HepG2 (cell line): ENCODE measurements at regions of chr6 and their contacts with region 1.

Region 1: DNA sequence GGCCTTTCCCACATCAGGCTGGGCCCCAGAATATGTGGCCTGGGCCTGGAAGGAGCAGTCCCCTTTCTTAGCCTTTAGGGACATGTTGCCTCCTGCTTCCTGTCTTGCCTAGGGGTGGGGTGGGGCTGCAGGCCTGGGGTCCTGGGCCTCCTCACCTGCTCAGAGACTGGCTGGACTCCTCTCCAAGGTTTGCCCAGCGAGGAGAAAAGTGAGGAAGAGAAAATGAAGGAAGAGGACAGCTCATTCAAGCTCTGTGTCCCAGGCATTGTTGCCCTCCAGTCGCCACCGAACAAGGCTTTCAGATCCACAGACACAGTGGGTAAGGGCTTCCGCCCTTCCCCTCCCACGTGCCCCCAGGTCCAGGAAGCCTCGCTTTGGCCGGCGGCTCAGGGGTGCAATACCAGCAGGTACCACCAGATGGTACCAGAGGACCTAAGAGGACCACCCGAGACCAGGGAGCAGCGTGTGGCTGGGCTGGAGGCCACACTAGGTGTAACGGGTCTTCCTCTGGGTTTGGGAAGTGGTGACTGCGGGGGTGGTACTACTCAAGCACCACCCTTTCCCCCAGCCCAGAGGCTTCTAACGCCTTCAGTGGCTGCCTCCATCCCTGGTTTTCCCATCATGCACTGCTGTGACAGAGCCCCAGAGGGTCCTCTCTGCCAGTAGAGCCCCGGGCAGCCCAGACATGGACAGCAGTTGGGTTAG is 5.5 kb upstream of the BAK1 start:
- DNase-seq: peak; percentile 72
- ATAC-seq: peak; percentile 29
- H3K4me3 ChIP-seq: peak overlapping the region in 1 of 3 experiments; percentile 36; a peak in 1 of 6 replicates
- H3K27ac ChIP-seq: no peak overlapping the region
- H3K4me1 ChIP-seq: peaks cover 53% of the 10 kb centered on the region
- H3K27me3 ChIP-seq: 0 out of 5 replicates have a peak, but pooled peaks cover 0 to 3% of the 10 kb centered on the region in 2 experiments
- CTCF ChIP-seq: peak; percentile 100
- EP300 ChIP-seq: no peak
- POLR2A ChIP-seq: no peak
- RAD21 ChIP-seq: peak; percentile 97

Region 2: GRCh38 chr6:33607784-33608161 is 22.2 kb after region 1 on chr6:
- CTCF ChIA-PET with region 1: interaction called, 24 read pairs
- POLR2A ChIA-PET with region 1: interaction called, 37 read pairs
- in situ Hi-C with region 1: no loop called
- intact Hi-C with region 1: no loop called
- DNase-seq: peak; percentile 79
- ATAC-seq: peak; percentile 44
- H3K4me3 ChIP-seq: no peak overlapping the region
- H3K27ac ChIP-seq: no peak overlapping the region
- H3K4me1 ChIP-seq: peaks cover 68% of the 10 kb centered on the region
- H3K27me3 ChIP-seq: no peaks in the 10 kb centered on the region; a peak in 1 of 5 replicates
- CTCF ChIP-seq: peak; percentile 76
- EP300 ChIP-seq: no peak
- POLR2A ChIP-seq: no peak
- RAD21 ChIP-seq: peak; percentile 64

Region 3: DNA sequence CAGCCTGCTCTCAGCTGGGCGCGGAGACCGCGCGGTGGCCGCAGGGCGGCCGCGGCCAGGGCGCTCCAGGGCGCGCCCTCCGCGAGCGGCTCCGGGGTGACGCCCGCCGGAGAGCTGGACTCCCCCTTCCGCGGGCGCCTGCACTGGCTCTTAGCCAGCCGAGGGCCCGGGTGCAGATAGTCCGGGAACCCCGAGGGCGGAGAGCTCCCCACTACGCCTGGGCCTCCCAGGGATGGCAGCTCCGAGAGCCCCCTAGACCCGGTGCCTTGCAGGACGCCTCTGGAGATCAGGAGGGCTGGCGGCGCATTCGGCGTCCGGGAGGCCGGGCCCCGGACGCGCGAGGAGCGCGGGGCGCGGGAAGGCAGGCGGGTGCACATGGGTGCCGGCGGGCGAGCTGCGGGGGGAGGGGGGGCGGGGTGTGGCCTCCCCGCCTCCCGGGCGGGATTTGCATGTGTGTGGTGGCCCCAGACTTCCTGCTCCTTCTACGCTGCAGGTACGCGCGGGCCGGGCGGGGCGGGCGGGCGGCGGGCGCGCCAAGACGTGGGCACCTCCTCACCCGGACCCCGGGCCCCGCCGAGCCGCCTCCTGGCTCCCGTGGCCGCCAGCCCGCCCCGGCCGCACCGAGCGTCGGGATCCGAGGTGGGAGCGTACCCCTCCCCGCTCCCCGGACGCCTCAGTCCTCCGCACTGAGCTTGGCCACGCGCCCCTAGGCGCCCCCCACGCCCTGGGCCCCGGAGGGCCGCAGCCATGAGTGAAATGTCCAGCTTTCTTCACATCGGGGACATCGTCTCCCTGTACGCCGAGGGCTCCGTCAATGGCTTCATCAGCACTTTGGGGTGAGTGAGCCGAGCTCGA is 35.5 kb after region 1 on chr6 and contains the start of gene ITPR3:
- CTCF ChIA-PET with region 1: interaction called, 3 read pairs
- POLR2A ChIA-PET with region 1: interaction called, 32 read pairs
- in situ Hi-C with region 1: loop called (anchors 5 kb)
- intact Hi-C with region 1: no loop called
- DNase-seq: no peak
- ATAC-seq: peak; percentile 75
- H3K4me3 ChIP-seq: peak within 1 kb of the TSS; percentile 80 to 86 (median 82)
- H3K27ac ChIP-seq: no peak within 1 kb of the TSS
- H3K4me1 ChIP-seq: peaks cover 52% of the 10 kb centered on the region
- H3K27me3 ChIP-seq: peaks cover 0 to 15% of the 10 kb centered on the region in 2 experiments; a peak in 3 of 5 replicates
- CTCF ChIP-seq: no peak
- EP300 ChIP-seq: no peak
- POLR2A ChIP-seq: no peak
- RAD21 ChIP-seq: no peak
- total RNA-seq, gene ITPR3: 3.4 and 3.8 TPM in 2 replicates

Region 4: GRCh38 chr6:33672808-33673207 is 87.3 kb after region 1 on chr6:
- CTCF ChIA-PET with region 1: interaction called, 23 read pairs
- POLR2A ChIA-PET with region 1: interaction called, 5 read pairs
- in situ Hi-C with region 1: loop called (anchors 5 kb)
- intact Hi-C with region 1: loop called (anchors 1 kb)
- DNase-seq: peak; percentile 78
- ATAC-seq: peak; percentile 96
- H3K4me3 ChIP-seq: no peak overlapping the region
- H3K27ac ChIP-seq: no peak overlapping the region
- H3K4me1 ChIP-seq: no peaks in the 10 kb centered on the region
- H3K27me3 ChIP-seq: no peaks in the 10 kb centered on the region
- CTCF ChIP-seq: peak; percentile 81
- EP300 ChIP-seq: no peak
- POLR2A ChIP-seq: no peak
- RAD21 ChIP-seq: peak; percentile 89

Region 5: GRCh38 chr6:33685411-33686224 is 100.1 kb after region 1 on chr6:
- CTCF ChIA-PET with region 1: no interaction called
- POLR2A ChIA-PET with region 1: no interaction called
- in situ Hi-C with region 1: no loop called
- intact Hi-C with region 1: no loop called
- DNase-seq: no peak
- ATAC-seq: no peak
- H3K4me3 ChIP-seq: no peak overlapping the region
- H3K27ac ChIP-seq: no peak overlapping the region
- H3K4me1 ChIP-seq: no peaks in the 10 kb centered on the region
- H3K27me3 ChIP-seq: no peaks in the 10 kb centered on the region
- CTCF ChIP-seq: no peak
- EP300 ChIP-seq: no peak
- POLR2A ChIP-seq: no peak
- RAD21 ChIP-seq: no peak

Region 6: DNA sequence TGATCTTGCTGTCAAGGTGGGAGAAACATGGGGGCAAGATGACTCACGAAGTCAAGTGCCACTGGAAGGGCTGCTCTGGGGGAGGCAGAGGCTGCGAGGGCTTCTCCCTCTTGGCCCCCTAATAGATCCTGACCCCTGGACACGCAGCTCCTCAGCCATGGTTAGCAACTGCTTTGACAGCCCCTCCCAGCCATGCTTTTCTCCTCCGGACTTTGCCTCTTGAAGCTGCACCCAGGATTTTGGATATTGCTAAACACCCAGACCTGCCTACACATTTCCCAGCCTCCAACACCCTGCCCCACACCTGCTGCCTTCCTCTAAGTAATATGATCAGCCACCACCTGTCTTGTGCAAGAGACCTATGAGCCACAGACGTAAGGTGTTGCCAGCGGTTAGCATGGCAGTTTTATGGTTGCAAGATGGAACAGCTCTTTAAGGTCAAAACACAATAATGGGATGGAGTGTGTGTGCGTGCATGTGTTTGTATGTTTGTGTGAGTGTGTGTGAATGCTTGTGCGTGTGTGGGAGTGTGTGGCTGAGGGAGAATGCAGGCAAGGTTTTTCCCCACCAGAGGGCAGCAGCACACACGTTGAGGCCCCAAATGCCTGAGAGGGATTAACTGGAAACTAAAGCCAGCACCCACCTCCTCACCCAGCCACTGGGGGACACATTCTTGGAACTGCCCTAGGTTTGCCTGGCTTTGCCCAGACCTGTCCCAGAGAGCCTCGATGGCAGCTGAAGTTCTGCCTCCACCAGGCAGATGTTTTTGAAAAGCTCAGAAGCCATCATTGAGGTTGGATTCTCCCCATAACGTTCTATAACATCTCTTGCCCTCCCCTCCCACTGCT is 158.7 kb after region 1 on chr6:
- CTCF ChIA-PET with region 1: interaction called, 6 read pairs
- POLR2A ChIA-PET with region 1: no interaction called
- in situ Hi-C with region 1: no loop called
- intact Hi-C with region 1: loop called (anchors 2 kb)
- DNase-seq: peak; percentile 78
- ATAC-seq: peak; percentile 73
- H3K4me3 ChIP-seq: 0 out of 6 replicates have a peak overlapping the region, but pooled peaks of 1 of the 3 experiments have one; percentile 15
- H3K27ac ChIP-seq: no peak overlapping the region
- H3K4me1 ChIP-seq: peaks cover 58% of the 10 kb centered on the region
- H3K27me3 ChIP-seq: peaks cover 4 to 38% of the 10 kb centered on the region in 2 experiments; a peak in 4 of 5 replicates
- CTCF ChIP-seq: peak; percentile 98
- EP300 ChIP-seq: 0 out of 4 replicates have a peak, but pooled peaks of 1 of the 2 experiments have one; percentile 9
- POLR2A ChIP-seq: no peak
- RAD21 ChIP-seq: peak; percentile 87